ENCODE measurements at regions of chr11 and their contacts with region 1.

Region 1: GRCh38 chr11:116791002-116791812 is 472 bp downstream of the APOA5 start:
- DNase-seq: no peak
- H3K4me3 ChIP-seq: peak overlapping the region; percentile 0 to 42 (median 14)
- H3K27ac ChIP-seq: no peak overlapping the region
- H3K4me1 ChIP-seq: peaks cover 20 to 32% (median 25%) of the 10 kb centered on the region in 4 donors
- H3K27me3 ChIP-seq: no peaks in the 10 kb centered on the region
- CTCF ChIP-seq: peak; percentile 84 to 96 (median 92)
- EP300 ChIP-seq: no peak
- POLR2A ChIP-seq: no peak

Region 2: GRCh38 chr11:116835791-116836631 is 44.8 kb after region 1 on chr11:
- intact Hi-C with region 1: loop called (anchors 2 kb)
- DNase-seq: peak; percentile 95
- H3K4me3 ChIP-seq: peak overlapping the region; percentile 45 to 54 (median 51)
- H3K27ac ChIP-seq: peak overlapping the region; percentile 73 to 88 (median 86)
- H3K4me1 ChIP-seq: peaks cover 27 to 44% (median 32%) of the 10 kb centered on the region in 4 donors
- H3K27me3 ChIP-seq: no peaks in the 10 kb centered on the region
- CTCF ChIP-seq: peak; percentile 64 to 75 (median 73)
- EP300 ChIP-seq: no peak
- POLR2A ChIP-seq: no peak

Region 3: GRCh38 chr11:116931206-116931953 is 140.2 kb after region 1 on chr11:
- intact Hi-C with region 1: no loop called
- DNase-seq: no peak
- H3K4me3 ChIP-seq: no peak overlapping the region
- H3K27ac ChIP-seq: peak overlapping the region; percentile 49 to 70 (median 60)
- H3K4me1 ChIP-seq: peaks cover 44 to 59% (median 48%) of the 10 kb centered on the region in 4 donors
- H3K27me3 ChIP-seq: no peaks in the 10 kb centered on the region
- CTCF ChIP-seq: no peak
- EP300 ChIP-seq: no peak
- POLR2A ChIP-seq: no peak

Region 4: DNA sequence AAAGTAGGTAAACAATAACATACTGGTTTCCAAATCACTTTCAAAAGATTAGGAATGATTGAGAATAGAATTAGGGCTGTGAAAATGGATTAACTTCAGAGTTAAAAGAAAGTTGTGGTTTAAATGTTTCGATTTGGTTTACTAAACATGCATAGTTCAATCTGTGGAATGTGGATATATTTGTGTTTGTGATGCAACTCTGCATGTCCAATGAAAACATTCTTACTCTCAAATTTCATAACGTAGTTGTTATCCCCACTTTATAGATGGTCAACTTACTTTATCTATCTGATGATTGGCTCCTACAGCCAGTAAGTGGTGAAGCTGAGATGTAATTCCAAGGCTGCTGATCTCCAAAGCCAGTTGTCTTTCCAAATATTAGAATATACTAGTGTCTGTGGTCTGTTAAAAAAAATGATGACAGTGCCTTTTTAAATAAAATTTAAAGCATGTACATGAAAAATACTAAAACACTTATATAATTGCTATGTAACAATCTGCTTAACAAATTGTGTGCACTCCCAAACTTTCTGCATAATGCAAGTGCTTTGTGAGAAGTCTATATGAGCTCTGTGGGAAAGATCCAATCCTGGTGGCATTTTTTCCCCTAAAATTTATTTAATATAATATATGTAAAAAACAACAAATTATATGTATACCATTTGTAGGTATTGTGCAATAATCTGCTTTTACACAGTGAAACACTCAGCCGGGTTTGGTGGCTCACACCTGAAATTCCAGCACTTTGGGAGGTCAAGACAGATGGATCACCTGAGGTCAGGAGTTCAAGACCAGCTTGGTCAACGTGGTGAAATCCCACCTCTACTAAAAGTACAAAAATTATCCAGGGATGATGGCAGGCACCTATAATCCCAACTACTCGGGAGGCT is 316.7 kb after region 1 on chr11:
- intact Hi-C with region 1: loop called (anchors 2 kb)
- DNase-seq: no peak
- H3K4me3 ChIP-seq: no peak overlapping the region
- H3K27ac ChIP-seq: no peak overlapping the region
- H3K4me1 ChIP-seq: peaks cover 0 to 16% (median 9%) of the 10 kb centered on the region in 4 donors
- H3K27me3 ChIP-seq: no peaks in the 10 kb centered on the region
- CTCF ChIP-seq: no peak
- EP300 ChIP-seq: no peak
- POLR2A ChIP-seq: no peak